ENCODE measurements at regions of chr7 and their contacts with region 1.

Region 1: DNA sequence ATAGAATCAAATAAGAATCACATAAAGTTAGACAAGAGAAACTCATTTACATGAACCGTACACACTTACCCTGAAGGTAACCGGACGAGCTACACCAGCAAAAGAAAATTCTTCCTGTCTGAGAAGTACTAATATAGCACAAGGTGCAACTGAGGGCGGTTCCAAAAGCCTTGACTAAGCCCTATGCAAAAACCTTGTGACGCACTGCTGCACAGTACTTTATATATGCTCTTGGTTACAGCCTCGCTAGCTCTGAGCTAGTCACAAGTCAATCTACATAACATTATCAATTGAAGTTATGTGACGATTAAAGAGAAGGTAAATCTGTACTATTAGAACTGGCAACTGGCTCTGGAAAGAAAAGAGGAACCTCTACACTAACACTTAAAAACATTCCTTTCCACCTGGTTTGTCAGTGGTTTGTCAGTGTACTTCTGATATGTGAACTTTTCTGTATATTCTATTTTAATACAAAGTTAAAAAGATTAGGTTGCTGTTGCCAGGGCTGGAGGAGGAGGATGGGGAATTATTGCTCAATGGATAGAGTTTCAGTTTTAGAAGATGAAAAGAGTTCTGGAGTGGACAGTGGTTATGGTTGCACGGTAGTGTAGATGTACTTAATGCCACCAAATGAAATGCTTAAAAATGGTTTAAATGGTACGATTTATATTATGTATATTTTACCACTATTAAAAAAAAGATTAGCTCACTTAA is 21.6 kb downstream of the NT5C3A start:
- DNase-seq: peak; percentile 61 to 71
- H3K4me3 ChIP-seq: no peak overlapping the region
- H3K27ac ChIP-seq: peak overlapping the region; percentile 6; the same call in 1 of the 2 replicates
- H3K4me1 ChIP-seq: peaks cover 27% of the 10 kb centered on the region
- H3K27me3 ChIP-seq: no peaks in the 10 kb centered on the region
- CTCF ChIP-seq: no peak

Region 2: GRCh38 chr7:32891800-32892520 is 149.0 kb before region 1 on chr7:
- CTCF ChIA-PET with region 1: no interaction called
- POLR2A ChIA-PET with region 1: interaction called, 4 read pairs
- intact Hi-C with region 1: loop called (anchors 5 kb)
- DNase-seq: peak; percentile 91 to 98
- H3K4me3 ChIP-seq: peak overlapping the region; percentile 86
- H3K27ac ChIP-seq: peak overlapping the region; percentile 87
- H3K4me1 ChIP-seq: peaks cover 35% of the 10 kb centered on the region
- H3K27me3 ChIP-seq: no peaks in the 10 kb centered on the region
- CTCF ChIP-seq: no peak

Region 3: GRCh38 chr7:32905175-32905662 is 135.7 kb before region 1 on chr7:
- CTCF ChIA-PET with region 1: no interaction called
- POLR2A ChIA-PET with region 1: interaction called, 23 read pairs
- intact Hi-C with region 1: no loop called
- DNase-seq: peak; percentile 85 to 93
- H3K4me3 ChIP-seq: peak overlapping the region; percentile 66
- H3K27ac ChIP-seq: peak overlapping the region; percentile 39
- H3K4me1 ChIP-seq: peaks cover 9% of the 10 kb centered on the region; the same call in 1 of the 2 replicates
- H3K27me3 ChIP-seq: no peaks in the 10 kb centered on the region
- CTCF ChIP-seq: no peak

Region 4: GRCh38 chr7:32957326-32958045 is 83.5 kb before region 1 on chr7 and contains the start of gene FKBP9:
- CTCF ChIA-PET with region 1: no interaction called
- POLR2A ChIA-PET with region 1: interaction called, 4 read pairs
- intact Hi-C with region 1: loop called (anchors 1 kb)
- DNase-seq: peak; percentile 77 to 97
- H3K4me3 ChIP-seq: peak within 1 kb of the TSS; percentile 85
- H3K27ac ChIP-seq: peak within 1 kb of the TSS; percentile 28
- H3K4me1 ChIP-seq: peaks cover 13% of the 10 kb centered on the region
- H3K27me3 ChIP-seq: no peaks in the 10 kb centered on the region
- CTCF ChIP-seq: no peak
- total RNA-seq, gene FKBP9: 155 and 160 TPM in 2 replicates

Region 5: DNA sequence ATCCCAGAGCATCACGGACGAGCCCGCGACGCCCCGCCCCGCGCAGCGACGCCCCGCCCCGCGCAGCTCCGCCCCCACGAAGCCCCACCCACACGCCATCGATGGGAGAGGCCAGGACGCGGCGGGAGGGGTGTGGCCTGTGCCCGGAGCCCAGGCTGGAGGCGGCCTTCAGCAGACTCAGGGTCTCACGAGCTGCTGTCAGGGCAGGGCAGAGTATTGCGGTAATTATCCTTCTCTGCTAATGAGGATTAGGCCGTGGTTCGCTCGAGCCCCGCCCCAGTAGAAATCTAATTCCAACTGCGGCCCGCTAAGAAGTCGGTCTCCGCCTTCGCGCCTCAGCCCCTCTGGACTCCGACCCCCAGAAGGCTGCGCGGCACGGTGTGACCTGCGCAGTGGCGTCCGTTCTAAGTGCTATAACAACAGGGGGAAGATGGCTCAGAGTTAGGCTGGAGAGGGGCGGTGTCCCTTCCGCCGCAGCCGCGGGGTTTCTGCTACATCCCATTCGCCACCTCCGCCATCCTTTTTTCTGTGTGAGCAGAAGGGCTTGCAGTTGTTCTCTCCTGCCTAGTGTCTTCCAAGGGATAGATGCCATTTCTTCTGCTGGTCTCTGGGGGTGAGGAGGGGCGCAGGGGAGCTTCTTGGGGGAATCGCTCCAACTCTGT is 22.0 kb after region 1 on chr7:
- CTCF ChIA-PET with region 1: interaction called, 3 read pairs
- POLR2A ChIA-PET with region 1: interaction called, 8 read pairs
- intact Hi-C with region 1: loop called (anchors 2 kb)
- DNase-seq: peak; percentile 91 to 95
- H3K4me3 ChIP-seq: peak overlapping the region; percentile 80
- H3K27ac ChIP-seq: no peak overlapping the region
- H3K4me1 ChIP-seq: peaks cover 21% of the 10 kb centered on the region
- H3K27me3 ChIP-seq: no peaks in the 10 kb centered on the region
- CTCF ChIP-seq: no peak

Region 6: GRCh38 chr7:33185786-33186185 is 144.8 kb after region 1 on chr7:
- CTCF ChIA-PET with region 1: no interaction called
- POLR2A ChIA-PET with region 1: no interaction called
- intact Hi-C with region 1: no loop called
- DNase-seq: peak; percentile 23 to 47
- H3K4me3 ChIP-seq: no peak overlapping the region
- H3K27ac ChIP-seq: no peak overlapping the region
- H3K4me1 ChIP-seq: no peaks in the 10 kb centered on the region
- H3K27me3 ChIP-seq: no peaks in the 10 kb centered on the region
- CTCF ChIP-seq: peak; percentile 85

Measured in PC-9 (cell line).